CD8-positive, alpha-beta T cell (primary cell): ENCODE measurements at regions of chr16 and their contacts with region 1.

Region 1: DNA sequence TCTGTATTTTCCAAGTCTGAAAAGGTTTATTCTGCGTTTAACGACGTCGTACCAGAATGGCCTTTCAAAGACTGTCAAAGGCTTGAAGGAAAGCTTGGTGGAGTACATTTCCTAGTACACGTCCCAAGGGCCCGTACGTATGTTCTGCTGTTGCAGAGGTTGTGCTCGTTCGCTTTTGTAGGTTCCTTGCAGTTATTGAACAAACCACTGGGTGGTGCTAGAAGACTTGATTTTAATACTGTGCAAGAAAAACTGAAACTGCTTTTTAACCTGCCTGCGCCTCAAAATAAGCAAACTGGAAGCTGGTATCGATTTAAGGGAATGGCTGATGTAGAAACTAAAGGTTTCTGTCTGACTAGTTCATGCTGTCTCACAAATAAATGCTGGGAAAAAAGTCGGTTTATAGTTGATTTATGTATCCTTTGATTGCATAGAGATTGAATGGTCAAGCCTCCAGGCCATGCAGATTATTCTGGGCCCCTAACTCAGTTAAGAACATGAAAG is 54.6 kb downstream of the USP10 start:
- DNase-seq: peak; percentile 42 to 87 (median 63)
- ATAC-seq: peak; percentile 72
- H3K4me3 ChIP-seq: no peak overlapping the region
- H3K4me3 Mint-ChIP-seq: peak overlapping the region; percentile 53
- H3K27ac ChIP-seq: peak overlapping the region in 1 of 2 experiments; percentile 2
- H3K27ac Mint-ChIP-seq: peak overlapping the region; percentile 45
- H3K4me1 ChIP-seq: peaks cover 45% of the 10 kb centered on the region
- H3K4me1 Mint-ChIP-seq: peaks cover 81% of the 10 kb centered on the region
- H3K27me3 ChIP-seq: no peaks in the 10 kb centered on the region
- H3K27me3 Mint-ChIP-seq: no peaks in the 10 kb centered on the region
- CTCF ChIP-seq: peak; percentile 93

Region 2: GRCh38 chr16:83630979-83631378 is 1123.4 kb before region 1 on chr16:
- CTCF ChIA-PET with region 1: no interaction called
- POLR2A ChIA-PET with region 1: no interaction called
- intact Hi-C with region 1: no loop called
- DNase-seq: no peak
- ATAC-seq: no peak
- H3K4me3 ChIP-seq: no peak overlapping the region
- H3K4me3 Mint-ChIP-seq: no peak overlapping the region
- H3K27ac ChIP-seq: no peak overlapping the region
- H3K27ac Mint-ChIP-seq: no peak overlapping the region
- H3K4me1 ChIP-seq: no peaks in the 10 kb centered on the region
- H3K4me1 Mint-ChIP-seq: no peaks in the 10 kb centered on the region
- H3K27me3 ChIP-seq: no peaks in the 10 kb centered on the region
- H3K27me3 Mint-ChIP-seq: no peaks in the 10 kb centered on the region
- CTCF ChIP-seq: no peak

Region 3: DNA sequence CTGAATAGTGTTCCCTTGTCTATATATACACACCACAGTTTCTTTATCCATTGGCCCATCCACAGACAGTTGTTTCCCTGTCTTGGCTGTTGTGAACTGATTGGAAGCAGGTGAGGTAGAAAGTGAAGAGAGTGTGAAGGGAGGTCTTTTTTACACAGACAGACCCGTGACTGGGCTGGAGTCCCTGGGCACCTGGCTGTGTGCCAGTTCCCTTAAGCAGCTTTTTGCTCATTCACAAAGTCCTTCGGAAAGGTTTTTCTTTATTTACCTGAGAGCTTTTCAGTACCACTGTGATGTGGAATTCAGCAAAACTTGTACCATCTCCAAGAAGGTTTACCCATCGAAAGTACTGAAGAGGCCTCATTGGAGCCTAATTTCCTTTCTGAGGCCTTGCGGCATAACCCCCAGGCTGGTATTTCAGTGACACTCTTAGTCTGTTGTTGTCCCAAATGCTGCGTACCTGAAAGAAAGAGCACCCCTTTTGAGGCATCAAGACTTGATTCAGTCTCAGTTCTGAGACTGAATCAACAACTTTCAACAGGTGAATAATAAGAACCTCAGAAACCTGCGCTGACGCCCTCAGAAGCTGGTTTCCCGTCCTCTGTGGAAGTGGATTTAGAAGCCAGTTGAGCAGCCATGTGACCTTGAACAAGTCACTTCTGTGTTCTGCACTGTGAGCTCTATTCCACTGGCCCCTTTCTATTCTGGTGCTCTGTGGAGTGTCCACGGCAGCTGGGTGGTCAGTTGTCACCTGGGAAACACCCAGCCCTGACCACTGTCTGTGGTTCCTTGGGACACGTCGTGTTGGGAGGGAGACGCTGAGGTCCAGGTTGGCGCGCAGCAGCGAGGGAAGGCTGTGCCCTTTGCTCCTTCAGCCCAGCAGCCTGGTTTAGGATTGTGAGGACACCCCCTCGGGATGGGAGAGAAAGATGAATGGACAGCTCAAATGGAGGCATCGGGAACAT is 11.5 kb after region 1 on chr16:
- CTCF ChIA-PET with region 1: interaction called, 30 read pairs
- POLR2A ChIA-PET with region 1: interaction called, 3 read pairs
- intact Hi-C with region 1: no loop called
- DNase-seq: peak in 1 of 9 experiments; percentile 38
- ATAC-seq: peak; percentile 63
- H3K4me3 ChIP-seq: no peak overlapping the region
- H3K4me3 Mint-ChIP-seq: no peak overlapping the region
- H3K27ac ChIP-seq: no peak overlapping the region
- H3K27ac Mint-ChIP-seq: peak overlapping the region; percentile 84
- H3K4me1 ChIP-seq: peaks cover 31% of the 10 kb centered on the region
- H3K4me1 Mint-ChIP-seq: peaks cover 28% of the 10 kb centered on the region
- H3K27me3 ChIP-seq: no peaks in the 10 kb centered on the region
- H3K27me3 Mint-ChIP-seq: no peaks in the 10 kb centered on the region
- CTCF ChIP-seq: no peak

Region 4: DNA sequence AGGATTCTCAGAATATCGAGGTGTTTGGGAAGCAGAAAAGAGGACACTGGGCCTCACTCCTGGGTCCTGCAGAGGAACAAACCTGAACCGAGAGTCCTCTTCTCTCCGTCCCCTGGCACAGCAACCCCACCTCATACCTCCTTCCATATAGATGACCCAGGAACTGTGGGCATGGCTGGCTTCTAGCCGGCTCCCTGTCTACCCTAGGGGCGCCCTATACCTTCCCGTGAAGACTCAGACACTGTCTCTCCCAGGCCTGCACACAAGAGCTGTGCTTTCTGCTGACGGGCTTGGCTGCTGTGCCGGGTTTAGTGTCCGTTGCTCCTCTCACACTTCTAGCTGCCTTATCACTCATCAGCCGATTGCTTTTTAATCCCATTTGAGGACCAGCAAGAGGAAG is 18.9 kb after region 1 on chr16:
- CTCF ChIA-PET with region 1: interaction called, 19 read pairs
- POLR2A ChIA-PET with region 1: no interaction called
- intact Hi-C with region 1: no loop called
- DNase-seq: no peak
- ATAC-seq: no peak
- H3K4me3 ChIP-seq: no peak overlapping the region
- H3K4me3 Mint-ChIP-seq: no peak overlapping the region
- H3K27ac ChIP-seq: no peak overlapping the region
- H3K27ac Mint-ChIP-seq: no peak overlapping the region
- H3K4me1 ChIP-seq: peaks cover 7% of the 10 kb centered on the region
- H3K4me1 Mint-ChIP-seq: peaks cover 2% of the 10 kb centered on the region
- H3K27me3 ChIP-seq: no peaks in the 10 kb centered on the region
- H3K27me3 Mint-ChIP-seq: no peaks in the 10 kb centered on the region
- CTCF ChIP-seq: no peak

Region 5: DNA sequence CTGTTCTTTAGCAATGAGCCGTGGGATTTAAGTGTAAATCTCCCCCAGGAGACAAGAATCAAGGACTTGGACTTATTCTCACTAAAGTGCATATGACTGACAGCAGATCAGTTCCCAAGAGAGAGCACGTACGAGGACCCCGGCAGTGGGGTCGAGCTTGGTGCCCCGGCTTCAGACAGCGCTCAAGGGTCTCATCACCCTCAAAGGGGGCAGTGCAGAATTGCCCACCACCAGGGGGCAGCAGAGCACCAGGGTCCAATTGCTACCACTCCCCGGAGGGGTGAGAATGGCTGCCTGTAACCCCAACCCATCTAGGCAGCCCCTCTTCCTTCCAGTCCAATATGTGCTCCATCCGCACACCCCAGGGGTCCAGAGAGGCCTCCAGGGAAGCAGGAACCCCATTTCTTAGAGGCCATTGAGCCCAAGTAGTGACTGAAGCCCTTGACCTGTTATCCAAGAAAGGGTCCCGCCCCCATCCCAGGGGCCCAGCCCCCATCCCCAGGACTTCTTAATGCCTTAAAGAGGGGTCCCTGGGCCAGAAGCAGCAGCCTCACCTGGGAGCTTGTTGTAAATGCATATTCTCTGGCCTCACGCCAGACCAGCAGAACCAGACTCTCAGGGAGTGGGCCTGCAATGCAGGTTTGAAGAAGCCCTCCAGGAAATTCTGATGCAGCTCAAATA is 170.8 kb after region 1 on chr16:
- CTCF ChIA-PET with region 1: interaction called, 18 read pairs
- POLR2A ChIA-PET with region 1: no interaction called
- intact Hi-C with region 1: loop called in 1 of 2 experiments (anchors 1 kb)
- DNase-seq: peak; percentile 37 to 81 (median 64)
- ATAC-seq: peak; percentile 65
- H3K4me3 ChIP-seq: no peak overlapping the region
- H3K4me3 Mint-ChIP-seq: no peak overlapping the region
- H3K27ac ChIP-seq: no peak overlapping the region
- H3K27ac Mint-ChIP-seq: no peak overlapping the region
- H3K4me1 ChIP-seq: peaks cover 1% of the 10 kb centered on the region
- H3K4me1 Mint-ChIP-seq: peaks cover 3% of the 10 kb centered on the region
- H3K27me3 ChIP-seq: no peaks in the 10 kb centered on the region
- H3K27me3 Mint-ChIP-seq: peaks cover 7% of the 10 kb centered on the region
- CTCF ChIP-seq: peak; percentile 72

Region 6: GRCh38 chr16:84952335-84953189 is 198.2 kb after region 1 on chr16:
- CTCF ChIA-PET with region 1: interaction called, 165 read pairs
- POLR2A ChIA-PET with region 1: interaction called, 3 read pairs
- intact Hi-C with region 1: loop called in 1 of 2 experiments (anchors 1 kb)
- DNase-seq: peak; percentile 42 to 84 (median 67)
- ATAC-seq: peak; percentile 92
- H3K4me3 ChIP-seq: no peak overlapping the region
- H3K4me3 Mint-ChIP-seq: no peak overlapping the region
- H3K27ac ChIP-seq: no peak overlapping the region
- H3K27ac Mint-ChIP-seq: no peak overlapping the region
- H3K4me1 ChIP-seq: peaks cover 16% of the 10 kb centered on the region
- H3K4me1 Mint-ChIP-seq: peaks cover 9% of the 10 kb centered on the region
- H3K27me3 ChIP-seq: peaks cover 0 to 4% of the 10 kb centered on the region in 2 experiments
- H3K27me3 Mint-ChIP-seq: no peaks in the 10 kb centered on the region
- CTCF ChIP-seq: peak; percentile 93

Region 7: GRCh38 chr16:85017151-85017550 is 262.7 kb after region 1 on chr16:
- CTCF ChIA-PET with region 1: no interaction called
- POLR2A ChIA-PET with region 1: no interaction called
- intact Hi-C with region 1: no loop called
- DNase-seq: peak in 1 of 9 experiments; percentile 25
- ATAC-seq: no peak
- H3K4me3 ChIP-seq: no peak overlapping the region
- H3K4me3 Mint-ChIP-seq: no peak overlapping the region
- H3K27ac ChIP-seq: no peak overlapping the region
- H3K27ac Mint-ChIP-seq: no peak overlapping the region
- H3K4me1 ChIP-seq: peaks cover 8% of the 10 kb centered on the region
- H3K4me1 Mint-ChIP-seq: peaks cover 13% of the 10 kb centered on the region
- H3K27me3 ChIP-seq: no peaks in the 10 kb centered on the region
- H3K27me3 Mint-ChIP-seq: peaks cover 2% of the 10 kb centered on the region
- CTCF ChIP-seq: no peak